Heart right ventricle (tissue), 16 donors: ENCODE measurements at regions of chr13 and their contacts with region 1.

Region 1: GRCh38 chr13:72694314-72694713 is 33.1 kb downstream of the MZT1 start:
- DNase-seq: no peak
- ATAC-seq: no peak
- H3K4me3 ChIP-seq: no peak overlapping the region
- H3K27ac ChIP-seq: no peak overlapping the region
- H3K4me1 ChIP-seq: no peaks in the 10 kb centered on the region
- H3K27me3 ChIP-seq: peaks cover 0 to 8% (median 0%) of the 10 kb centered on the region in 7 donors
- CTCF ChIP-seq: no peak

Region 2: DNA sequence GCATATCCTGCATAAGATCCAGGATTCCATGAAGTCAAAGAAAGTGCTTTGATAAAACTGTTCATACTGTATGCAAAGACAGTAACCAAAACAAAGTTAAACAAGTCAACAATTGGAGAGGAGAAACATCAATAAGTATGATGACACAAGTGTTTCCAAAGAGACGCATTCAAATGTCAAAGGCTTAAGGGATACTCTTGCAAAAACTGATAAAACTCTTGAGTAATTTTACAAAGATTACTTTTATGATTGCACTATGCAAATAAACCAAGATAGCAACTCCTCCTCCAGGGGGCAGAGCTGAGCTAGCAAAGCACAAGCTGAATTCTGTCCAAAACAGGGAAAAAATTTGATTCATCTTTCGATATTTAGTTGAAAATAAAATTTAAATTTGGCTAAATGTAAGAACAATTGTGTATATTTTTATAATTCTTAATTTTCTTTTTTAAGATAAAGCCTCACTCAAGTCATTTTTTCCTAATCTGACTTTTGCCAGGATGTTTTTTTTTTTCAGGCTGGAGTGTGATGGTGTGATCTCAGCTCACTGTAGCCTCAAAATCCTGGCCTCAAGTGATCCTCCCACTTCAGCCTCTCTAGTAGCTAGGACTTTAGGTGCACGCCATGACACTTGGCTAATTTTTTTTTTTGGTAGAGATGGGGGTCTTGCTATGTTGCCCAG is 50.9 kb before region 1 on chr13:
- intact Hi-C with region 1: loop called in 3 of 10 experiments (anchors 5 kb)
- DNase-seq: peak in 1 of 2 donors; percentile 28
- ATAC-seq: no peak
- H3K4me3 ChIP-seq: no peak overlapping the region
- H3K27ac ChIP-seq: no peak overlapping the region
- H3K4me1 ChIP-seq: no peaks in the 10 kb centered on the region
- H3K27me3 ChIP-seq: peaks cover 0 to 3% (median 0%) of the 10 kb centered on the region in 7 donors
- CTCF ChIP-seq: peak in 8 of 9 donors; percentile 27 to 71 (median 65)

Region 3: DNA sequence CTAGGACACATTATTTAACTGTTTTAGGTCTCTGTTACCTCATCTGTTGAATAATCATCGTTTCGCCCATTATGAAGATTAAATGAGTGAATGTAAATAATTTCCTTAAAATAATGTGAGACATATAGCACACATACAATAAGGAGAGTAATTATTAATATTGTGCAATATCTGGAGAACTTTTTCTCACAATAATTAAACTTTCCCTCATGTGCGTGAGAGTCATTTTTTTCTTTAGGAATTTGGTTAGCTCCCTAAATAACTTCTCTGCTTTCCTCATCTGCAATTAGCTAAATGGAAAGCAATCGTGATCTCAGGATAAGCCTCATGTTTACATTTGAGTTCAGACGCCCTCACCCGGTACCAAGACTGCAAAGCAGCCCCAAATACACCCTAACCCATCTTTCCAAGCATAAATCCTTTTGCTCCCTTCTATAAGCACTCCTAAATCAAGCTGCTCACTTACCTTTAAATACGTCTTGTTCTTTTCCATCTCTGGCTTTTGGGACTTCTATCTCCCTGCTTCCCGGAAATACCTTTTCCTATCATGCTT is 45.7 kb before region 1 on chr13:
- intact Hi-C with region 1: loop called in 3 of 10 experiments (anchors 5 kb)
- DNase-seq: no peak
- ATAC-seq: no peak
- H3K4me3 ChIP-seq: no peak overlapping the region
- H3K27ac ChIP-seq: no peak overlapping the region
- H3K4me1 ChIP-seq: no peaks in the 10 kb centered on the region
- H3K27me3 ChIP-seq: peaks cover 0 to 3% (median 0%) of the 10 kb centered on the region in 7 donors
- CTCF ChIP-seq: no peak

Region 4: GRCh38 chr13:73440296-73440895 is 746.1 kb after region 1 on chr13:
- intact Hi-C with region 1: no loop called
- DNase-seq: no peak
- ATAC-seq: no peak
- H3K4me3 ChIP-seq: no peak overlapping the region
- H3K27ac ChIP-seq: no peak overlapping the region
- H3K4me1 ChIP-seq: no peaks in the 10 kb centered on the region
- H3K27me3 ChIP-seq: no peaks in the 10 kb centered on the region
- CTCF ChIP-seq: no peak